ENCODE measurements at regions of chr15 and their contacts with region 1.

Region 1: DNA sequence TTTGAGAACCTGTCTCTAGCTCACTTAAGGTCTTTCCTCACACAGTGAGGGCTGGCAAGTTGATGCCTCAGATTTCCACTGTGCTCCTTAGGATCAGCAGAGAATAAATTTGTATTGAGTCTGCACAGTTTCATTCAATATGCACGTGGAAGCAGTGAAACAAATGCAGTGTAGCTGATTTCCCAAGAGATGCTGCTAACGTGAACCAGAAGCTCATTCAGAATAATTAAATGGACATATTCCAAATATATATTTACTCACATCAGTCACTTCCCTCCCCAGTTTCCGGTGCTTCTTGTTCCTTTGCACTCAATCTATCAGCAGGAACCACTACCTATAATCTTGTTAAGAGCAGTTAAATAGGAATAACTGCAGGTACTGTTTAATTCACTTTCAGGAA is 86.1 kb downstream of the UNC13C start:
- DNase-seq: no peak
- ATAC-seq: no peak
- H3K4me3 ChIP-seq: no peak overlapping the region
- H3K27ac ChIP-seq: no peak overlapping the region
- H3K4me1 ChIP-seq: no peaks in the 10 kb centered on the region
- H3K27me3 ChIP-seq: no peaks in the 10 kb centered on the region
- CTCF ChIP-seq: no peak

Region 2: GRCh38 chr15:53987480-53987879 is 76.9 kb before region 1 on chr15:
- intact Hi-C with region 1: loop called in 1 of 10 experiments (anchors 10 kb)
- DNase-seq: no peak
- ATAC-seq: no peak
- H3K4me3 ChIP-seq: no peak overlapping the region
- H3K27ac ChIP-seq: no peak overlapping the region
- H3K4me1 ChIP-seq: no peaks in the 10 kb centered on the region
- H3K27me3 ChIP-seq: peaks cover 0 to 5% (median 0%) of the 10 kb centered on the region in 7 donors
- CTCF ChIP-seq: no peak